Activated CD4-positive, alpha-beta memory T cell treated with anti-CD3 and anti-CD28 coated beads for 36 hours (primary cell): ENCODE measurements at regions of chr2 and their contacts with region 1.

Region 1: GRCh38 chr2:27370026-27370815 is at the starts of genes EIF2B4 and SNX17:
- DNase-seq: peak; percentile 100
- H3K4me3 Mint-ChIP-seq: peak within 1 kb of the TSS; percentile 87
- H3K27ac Mint-ChIP-seq: peak within 1 kb of the TSS; percentile 96
- H3K4me1 Mint-ChIP-seq: peaks cover 29% of the 10 kb centered on the region
- H3K27me3 Mint-ChIP-seq: no peaks in the 10 kb centered on the region
- total RNA-seq, gene EIF2B4: 34.6 to 36.5 TPM
- total RNA-seq, gene SNX17: 91.2 to 93.2 TPM

Region 2: GRCh38 chr2:27322766-27323595 is 47.2 kb before region 1 on chr2 and contains the start of gene MPV17:
- CTCF ChIA-PET with region 1: interaction called, 4 read pairs
- POLR2A ChIA-PET with region 1: no interaction called
- intact Hi-C with region 1: loop called (anchors 1 kb)
- DNase-seq: peak; percentile 94
- H3K4me3 Mint-ChIP-seq: peak within 1 kb of the TSS; percentile 93
- H3K27ac Mint-ChIP-seq: peak within 1 kb of the TSS; percentile 88
- H3K4me1 Mint-ChIP-seq: peaks cover 18% of the 10 kb centered on the region
- H3K27me3 Mint-ChIP-seq: no peaks in the 10 kb centered on the region
- total RNA-seq, gene MPV17: 85.5 to 86.0 TPM

Region 3: DNA sequence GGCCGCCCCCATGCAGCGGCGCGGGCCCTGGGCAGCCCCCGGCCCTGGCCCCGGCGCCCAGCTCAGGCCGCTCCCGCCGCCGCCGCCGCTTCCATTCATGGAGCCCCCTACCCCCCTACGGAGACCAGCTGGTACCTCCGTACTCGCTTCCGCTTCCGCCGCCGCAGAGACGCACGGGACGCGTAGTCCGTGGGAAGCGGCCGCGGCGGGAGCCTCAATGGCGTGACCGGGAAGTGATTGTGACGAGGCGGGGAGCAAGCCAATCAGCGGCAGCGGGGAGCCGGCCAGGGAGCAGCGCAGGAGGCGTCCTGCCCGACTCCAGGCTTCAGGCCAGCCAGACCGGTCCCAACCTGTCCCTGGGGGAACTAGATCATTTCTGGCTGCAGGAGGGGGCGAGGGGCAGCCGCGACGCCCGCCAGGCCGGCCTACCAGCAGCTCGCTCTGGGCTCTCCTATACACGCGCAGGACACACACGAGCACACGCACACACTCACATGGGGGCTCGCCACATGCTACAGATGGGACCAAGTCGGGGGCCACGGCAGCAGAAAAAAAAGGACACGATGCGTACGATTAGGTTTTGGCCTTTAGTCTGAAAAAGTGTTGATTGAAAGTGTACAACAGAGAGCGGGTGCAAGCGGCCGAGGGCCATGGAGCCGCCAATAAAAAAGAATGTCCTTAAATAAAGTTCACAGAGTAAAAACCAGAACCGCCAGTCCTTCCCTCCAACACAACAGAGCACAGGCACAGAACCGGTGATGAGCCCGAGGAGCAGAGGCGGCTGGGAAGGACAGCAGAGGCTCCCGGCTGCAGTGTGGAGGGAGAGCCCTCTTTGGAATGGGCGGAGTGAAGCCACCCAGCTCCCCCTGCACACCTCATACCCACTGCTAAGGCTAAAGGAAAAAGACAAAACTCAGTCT is 10.7 kb after region 1 on chr2 and contains the start of gene ZNF513:
- CTCF ChIA-PET with region 1: interaction called, 13 read pairs
- POLR2A ChIA-PET with region 1: interaction called, 54 read pairs
- intact Hi-C with region 1: loop called (anchors 1 kb)
- DNase-seq: peak; percentile 94
- H3K4me3 Mint-ChIP-seq: peak within 1 kb of the TSS; percentile 90
- H3K27ac Mint-ChIP-seq: peak within 1 kb of the TSS; percentile 80
- H3K4me1 Mint-ChIP-seq: peaks cover 22% of the 10 kb centered on the region
- H3K27me3 Mint-ChIP-seq: no peaks in the 10 kb centered on the region
- total RNA-seq, gene ZNF513: 8.6 to 9.7 TPM

Region 4: GRCh38 chr2:27409321-27410073 is 39.3 kb after region 1 on chr2 and contains the start of gene PPM1G:
- CTCF ChIA-PET with region 1: interaction called, 3 read pairs
- POLR2A ChIA-PET with region 1: interaction called, 16 read pairs
- intact Hi-C with region 1: loop called (anchors 1 kb)
- DNase-seq: peak; percentile 98
- H3K4me3 Mint-ChIP-seq: peak within 1 kb of the TSS; percentile 88
- H3K27ac Mint-ChIP-seq: peak within 1 kb of the TSS; percentile 87
- H3K4me1 Mint-ChIP-seq: peaks cover 32% of the 10 kb centered on the region
- H3K27me3 Mint-ChIP-seq: no peaks in the 10 kb centered on the region
- total RNA-seq, gene PPM1G: 127 to 132 TPM

Region 5: DNA sequence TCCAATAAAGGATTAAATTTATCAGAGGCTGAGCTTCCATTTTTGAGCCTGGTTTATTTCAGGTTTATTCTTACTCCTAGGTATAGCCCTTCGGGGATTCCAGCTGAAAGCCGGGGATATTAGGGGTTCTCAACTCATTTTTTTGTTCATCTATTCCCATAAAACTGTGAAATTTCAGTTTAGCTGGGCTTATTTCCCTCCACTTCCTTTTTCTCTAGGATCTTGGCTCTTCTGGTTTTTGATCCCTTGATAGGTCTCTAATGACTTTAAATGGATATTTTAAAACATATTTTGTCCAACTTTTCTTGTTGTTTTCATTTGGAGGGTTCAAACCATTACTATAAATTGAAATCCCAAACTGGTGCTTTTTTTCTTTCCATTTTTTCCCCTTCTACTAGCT is 189.0 kb after region 1 on chr2:
- CTCF ChIA-PET with region 1: no interaction called
- POLR2A ChIA-PET with region 1: no interaction called
- intact Hi-C with region 1: no loop called
- DNase-seq: no peak
- H3K4me3 Mint-ChIP-seq: no peak overlapping the region
- H3K27ac Mint-ChIP-seq: no peak overlapping the region
- H3K4me1 Mint-ChIP-seq: no peaks in the 10 kb centered on the region
- H3K27me3 Mint-ChIP-seq: peaks cover 8% of the 10 kb centered on the region

Region 6: DNA sequence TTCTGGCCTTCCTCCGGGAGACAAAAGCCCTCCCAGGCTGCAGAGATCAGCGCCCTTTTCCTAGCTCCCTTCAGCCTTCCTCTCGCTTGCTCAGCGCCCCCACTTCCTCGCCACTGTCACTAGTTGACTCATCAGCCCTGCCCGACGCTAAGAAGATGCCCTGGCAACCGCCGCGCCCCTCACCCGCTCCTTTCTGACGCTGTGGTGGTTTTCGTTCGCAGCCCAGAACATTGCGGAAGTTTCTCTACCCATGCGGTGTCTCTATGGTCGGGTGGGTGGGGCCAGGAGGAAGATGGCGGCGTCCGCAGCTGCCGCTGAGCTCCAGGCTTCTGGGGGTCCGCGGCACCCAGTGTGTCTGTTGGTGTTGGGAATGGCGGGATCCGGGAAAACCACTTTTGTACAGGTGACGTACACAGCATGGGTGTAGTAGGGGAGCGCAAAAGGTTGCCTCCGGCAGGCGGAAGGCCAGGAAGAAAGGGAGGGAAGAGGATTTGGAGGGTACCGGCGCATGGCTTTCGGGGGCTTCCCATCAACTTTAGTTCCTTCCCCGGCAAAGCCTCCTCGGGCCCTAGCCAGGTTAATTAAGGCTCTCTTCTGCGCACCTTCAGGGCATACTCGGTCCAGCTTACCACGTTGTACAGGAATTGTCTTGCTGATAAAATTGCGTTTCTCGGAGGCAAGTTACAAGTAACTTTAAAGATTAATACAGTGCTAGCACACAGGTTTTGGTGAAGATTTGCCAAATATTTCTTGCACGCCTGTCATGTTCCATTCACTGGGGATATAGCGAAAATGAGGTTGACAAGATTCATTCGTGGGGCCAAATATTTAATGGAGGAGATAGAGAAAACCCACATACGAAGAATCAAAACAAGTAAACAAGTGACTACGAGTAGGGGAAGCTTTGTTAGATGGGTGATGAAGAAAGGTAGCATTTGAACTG is 258.8 kb after region 1 on chr2 and contains the starts of genes CCDC121 and GPN1:
- CTCF ChIA-PET with region 1: no interaction called
- POLR2A ChIA-PET with region 1: no interaction called
- intact Hi-C with region 1: loop called (anchors 2 kb)
- DNase-seq: peak; percentile 98
- H3K4me3 Mint-ChIP-seq: no peak within 1 kb of the TSS
- H3K27ac Mint-ChIP-seq: no peak within 1 kb of the TSS
- H3K4me1 Mint-ChIP-seq: peaks cover 35% of the 10 kb centered on the region
- H3K27me3 Mint-ChIP-seq: no peaks in the 10 kb centered on the region
- total RNA-seq, gene CCDC121: 0.34 to 0.36 TPM
- total RNA-seq, gene GPN1: 54.4 to 56.8 TPM